ENCODE measurements at regions of chr1 and their contacts with region 1.

Region 1: GRCh38 chr1:47437447-47438164 is at the start of gene FOXD2:
- DNase-seq: peak; percentile 91 to 94 (median 93)
- H3K4me3 ChIP-seq: peak within 1 kb of the TSS; percentile 62
- H3K4me3 Mint-ChIP-seq: peak within 1 kb of the TSS; percentile 89 to 96 (median 92)
- H3K27ac ChIP-seq: peak within 1 kb of the TSS; percentile 72
- H3K27ac Mint-ChIP-seq: peak within 1 kb of the TSS; percentile 82 to 97 (median 90)
- H3K4me1 ChIP-seq: peaks cover 18% of the 10 kb centered on the region
- H3K4me1 Mint-ChIP-seq: peaks cover 27 to 47% (median 32%) of the 10 kb centered on the region in 3 donors
- H3K27me3 ChIP-seq: peaks cover 17% of the 10 kb centered on the region
- H3K27me3 Mint-ChIP-seq: peaks cover 0 to 4% of the 10 kb centered on the region in 2 donors
- total RNA-seq, gene FOXD2: 0.18 to 0.22 TPM

Region 2: GRCh38 chr1:47192458-47193384 is 244.9 kb before region 1 on chr1:
- CTCF ChIA-PET with region 1: interaction called, 17 read pairs
- POLR2A ChIA-PET with region 1: no interaction called
- DNase-seq: peak; percentile 35 to 74 (median 46)
- H3K4me3 ChIP-seq: no peak overlapping the region
- H3K4me3 Mint-ChIP-seq: no peak overlapping the region
- H3K27ac ChIP-seq: no peak overlapping the region
- H3K27ac Mint-ChIP-seq: no peak overlapping the region
- H3K4me1 ChIP-seq: no peaks in the 10 kb centered on the region
- H3K4me1 Mint-ChIP-seq: peaks cover 4 to 5% (median 4%) of the 10 kb centered on the region in 3 donors
- H3K27me3 ChIP-seq: no peaks in the 10 kb centered on the region
- H3K27me3 Mint-ChIP-seq: peaks cover 10 to 18% of the 10 kb centered on the region in 2 donors

Region 3: DNA sequence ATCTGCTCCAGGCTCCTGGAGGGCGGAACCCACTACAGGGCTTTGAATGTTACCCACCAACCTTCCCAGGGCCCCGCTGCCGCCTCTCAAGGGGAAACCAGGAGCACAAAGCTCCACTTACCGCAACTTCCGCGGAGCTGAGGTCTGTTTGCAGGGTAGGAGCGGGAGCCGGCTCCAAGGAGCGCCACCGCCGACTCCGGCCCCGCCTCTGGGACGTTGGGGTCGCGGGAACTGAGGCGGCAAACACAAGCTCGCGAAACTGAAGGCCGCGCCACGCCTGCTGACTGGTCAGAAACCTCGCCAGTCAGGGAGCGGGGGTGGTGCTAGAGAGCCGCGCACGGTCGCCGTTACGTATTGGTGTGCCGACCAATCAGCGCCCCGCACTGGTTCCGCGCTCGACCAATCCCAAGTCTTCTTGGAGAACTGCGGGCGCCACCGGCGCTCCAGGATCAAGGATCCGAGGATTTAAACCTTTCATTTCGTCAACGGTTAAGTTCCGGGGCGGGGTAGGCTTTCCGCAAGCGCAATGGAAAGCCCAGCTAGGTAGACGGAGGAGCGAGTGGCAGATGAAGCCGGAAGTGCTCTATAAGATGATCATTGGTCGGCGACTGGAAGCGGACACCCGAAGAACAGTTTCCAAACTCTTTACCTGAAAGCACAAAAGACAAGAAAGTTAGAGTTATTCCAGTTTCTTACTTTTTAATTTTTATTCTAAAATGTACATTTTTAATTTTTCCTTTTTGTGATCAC is 123.5 kb before region 1 on chr1 and contains the start of gene STIL:
- CTCF ChIA-PET with region 1: interaction called, 10 read pairs
- POLR2A ChIA-PET with region 1: interaction called, 4 read pairs
- DNase-seq: peak; percentile 95 to 97 (median 96)
- H3K4me3 ChIP-seq: peak within 1 kb of the TSS; percentile 85
- H3K4me3 Mint-ChIP-seq: peak within 1 kb of the TSS; percentile 87 to 97 (median 93)
- H3K27ac ChIP-seq: peak within 1 kb of the TSS; percentile 82
- H3K27ac Mint-ChIP-seq: peak within 1 kb of the TSS; percentile 87 to 98 (median 93)
- H3K4me1 ChIP-seq: peaks cover 7% of the 10 kb centered on the region
- H3K4me1 Mint-ChIP-seq: peaks cover 16 to 21% (median 18%) of the 10 kb centered on the region in 3 donors
- H3K27me3 ChIP-seq: no peaks in the 10 kb centered on the region
- H3K27me3 Mint-ChIP-seq: peaks cover 0 to 5% of the 10 kb centered on the region in 2 donors
- total RNA-seq, gene STIL: 18.4 to 19.1 TPM

Region 4: DNA sequence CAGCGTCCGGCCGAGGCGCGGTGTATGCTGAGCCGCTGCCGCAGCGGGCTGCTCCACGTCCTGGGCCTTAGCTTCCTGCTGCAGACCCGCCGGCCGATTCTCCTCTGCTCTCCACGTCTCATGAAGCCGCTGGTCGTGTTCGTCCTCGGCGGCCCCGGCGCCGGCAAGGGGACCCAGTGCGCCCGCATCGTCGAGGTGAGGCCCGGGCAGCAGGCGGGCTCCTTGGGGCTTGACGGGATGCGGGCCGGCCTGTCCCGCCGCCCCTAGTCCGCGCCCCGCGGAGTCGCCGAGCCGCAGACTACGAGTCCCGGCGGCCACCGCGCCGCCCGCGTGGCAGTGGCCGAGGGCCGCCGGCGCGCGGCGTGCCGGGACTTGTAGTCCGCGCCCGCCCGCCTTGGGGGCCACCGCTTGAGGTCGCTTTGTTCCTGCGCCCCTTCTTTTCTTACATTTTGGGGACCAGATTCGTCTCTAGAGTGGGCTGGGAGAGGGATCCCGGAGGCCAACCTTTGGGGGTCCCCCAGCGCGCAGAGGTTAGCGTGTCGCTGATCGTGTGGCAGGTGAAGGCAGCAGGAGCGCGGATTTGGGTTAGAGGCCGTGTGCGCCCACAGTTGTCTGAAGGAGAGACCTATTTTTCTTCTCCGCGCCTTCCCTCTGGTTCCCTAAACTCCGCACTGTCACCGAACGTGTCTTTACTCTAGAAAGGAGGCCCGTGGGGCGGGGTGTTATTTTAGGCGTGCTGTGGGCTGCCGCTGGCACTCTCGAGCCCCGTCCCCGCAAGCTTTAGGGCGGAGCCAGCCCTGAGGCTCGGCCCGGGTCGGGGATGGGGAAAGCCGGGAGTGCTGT is 103.5 kb before region 1 on chr1:
- CTCF ChIA-PET with region 1: interaction called, 13 read pairs
- POLR2A ChIA-PET with region 1: interaction called, 3 read pairs
- DNase-seq: peak; percentile 67 to 81 (median 77)
- H3K4me3 ChIP-seq: peak overlapping the region; percentile 98
- H3K4me3 Mint-ChIP-seq: peak overlapping the region in 4 of 7 donors; percentile 92 to 97 (median 94)
- H3K27ac ChIP-seq: peak overlapping the region; percentile 89
- H3K27ac Mint-ChIP-seq: peak overlapping the region in 7 of 8 donors; percentile 86 to 98 (median 94)
- H3K4me1 ChIP-seq: peaks cover 28% of the 10 kb centered on the region
- H3K4me1 Mint-ChIP-seq: peaks cover 21 to 31% (median 27%) of the 10 kb centered on the region in 3 donors
- H3K27me3 ChIP-seq: no peaks in the 10 kb centered on the region
- H3K27me3 Mint-ChIP-seq: no peaks in the 10 kb centered on the region

Region 5: GRCh38 chr1:47449822-47450552 is 12.4 kb after region 1 on chr1:
- CTCF ChIA-PET with region 1: interaction called, 48 read pairs
- POLR2A ChIA-PET with region 1: interaction called, 3 read pairs
- DNase-seq: no peak
- H3K4me3 ChIP-seq: no peak overlapping the region
- H3K4me3 Mint-ChIP-seq: peak overlapping the region in 1 of 7 donors; percentile 45
- H3K27ac ChIP-seq: no peak overlapping the region
- H3K27ac Mint-ChIP-seq: no peak overlapping the region
- H3K4me1 ChIP-seq: peaks cover 3% of the 10 kb centered on the region
- H3K4me1 Mint-ChIP-seq: peaks cover 5 to 10% (median 8%) of the 10 kb centered on the region in 3 donors
- H3K27me3 ChIP-seq: peaks cover 49% of the 10 kb centered on the region
- H3K27me3 Mint-ChIP-seq: peaks cover 51 to 77% of the 10 kb centered on the region in 2 donors

Region 6: GRCh38 chr1:47710329-47711071 is 272.9 kb after region 1 on chr1:
- CTCF ChIA-PET with region 1: interaction called, 31 read pairs
- POLR2A ChIA-PET with region 1: no interaction called
- DNase-seq: peak; percentile 44 to 59 (median 54)
- H3K4me3 ChIP-seq: no peak overlapping the region
- H3K4me3 Mint-ChIP-seq: peak overlapping the region in 6 of 7 donors; percentile 38 to 82 (median 54)
- H3K27ac ChIP-seq: no peak overlapping the region
- H3K27ac Mint-ChIP-seq: no peak overlapping the region
- H3K4me1 ChIP-seq: peaks cover 10% of the 10 kb centered on the region
- H3K4me1 Mint-ChIP-seq: peaks cover 7 to 24% (median 7%) of the 10 kb centered on the region in 3 donors
- H3K27me3 ChIP-seq: peaks cover 42% of the 10 kb centered on the region
- H3K27me3 Mint-ChIP-seq: peaks cover 62 to 76% of the 10 kb centered on the region in 2 donors

Region 7: DNA sequence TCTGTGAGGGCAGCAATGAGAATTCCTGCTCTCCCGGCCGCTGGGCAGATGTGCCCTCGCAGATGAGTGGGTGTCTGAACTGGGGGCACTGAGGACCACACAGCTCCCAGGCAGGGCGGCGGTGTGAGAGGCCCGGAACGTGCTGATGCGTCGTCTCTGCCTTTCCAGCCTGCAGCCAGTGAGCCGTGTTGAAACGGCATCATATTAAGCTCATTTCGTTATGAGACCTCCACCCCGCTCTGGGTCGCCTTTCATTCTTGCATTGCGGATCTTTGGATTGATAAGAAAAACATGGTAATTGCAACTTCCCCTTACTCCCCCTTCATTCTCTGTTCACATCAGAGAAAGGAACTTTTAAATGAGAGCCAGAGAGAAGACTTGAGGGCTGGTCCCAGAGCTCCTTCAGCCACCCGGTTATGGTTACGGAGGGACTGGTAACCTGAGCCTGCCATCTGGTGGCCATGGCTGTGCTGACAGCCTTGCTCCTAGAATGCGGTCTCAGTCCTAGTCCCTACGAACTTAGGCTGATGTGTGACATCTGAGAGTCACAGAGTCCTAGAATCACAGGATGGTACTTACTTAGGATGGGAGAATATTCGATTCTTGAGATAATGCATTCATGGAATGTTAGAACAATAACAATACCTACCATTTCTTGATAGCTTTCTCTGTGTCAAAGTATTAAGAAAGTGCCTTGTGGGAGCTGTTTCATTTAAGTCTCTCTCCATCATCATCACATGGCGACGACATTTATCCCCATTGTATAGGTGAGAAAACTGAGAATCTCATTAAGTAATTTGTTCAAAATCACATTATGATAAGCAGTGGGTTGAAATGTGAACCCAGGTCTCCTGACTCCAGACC is 288.6 kb after region 1 on chr1:
- CTCF ChIA-PET with region 1: interaction called, 50 read pairs
- POLR2A ChIA-PET with region 1: interaction called, 4 read pairs
- DNase-seq: peak; percentile 27 to 62 (median 32)
- H3K4me3 ChIP-seq: no peak overlapping the region
- H3K4me3 Mint-ChIP-seq: peak overlapping the region in 6 of 7 donors; percentile 59 to 90 (median 75)
- H3K27ac ChIP-seq: no peak overlapping the region
- H3K27ac Mint-ChIP-seq: no peak overlapping the region
- H3K4me1 ChIP-seq: no peaks in the 10 kb centered on the region
- H3K4me1 Mint-ChIP-seq: peaks cover 7 to 14% (median 9%) of the 10 kb centered on the region in 3 donors
- H3K27me3 ChIP-seq: peaks cover 19% of the 10 kb centered on the region
- H3K27me3 Mint-ChIP-seq: peaks cover 35 to 55% of the 10 kb centered on the region in 2 donors